ENCODE measurements at regions of chr17 and their contacts with region 1.

Region 1: GRCh38 chr17:59466946-59467801 is 98.2 kb upstream of the DHX40 start:
- DNase-seq: no peak

Region 2: GRCh38 chr17:58637011-58637570 is 830.1 kb before region 1 on chr17:
- intact Hi-C with region 1: loop called in 1 of 2 experiments (anchors 5 kb)
- DNase-seq: no peak

Region 3: GRCh38 chr17:59415397-59415796 is 51.8 kb before region 1 on chr17:
- intact Hi-C with region 1: no loop called
- DNase-seq: no peak

Measured in posterior vena cava (tissue), 2 donors.